ENCODE measurements at regions of chr12 and their contacts with region 1.

Region 1: DNA sequence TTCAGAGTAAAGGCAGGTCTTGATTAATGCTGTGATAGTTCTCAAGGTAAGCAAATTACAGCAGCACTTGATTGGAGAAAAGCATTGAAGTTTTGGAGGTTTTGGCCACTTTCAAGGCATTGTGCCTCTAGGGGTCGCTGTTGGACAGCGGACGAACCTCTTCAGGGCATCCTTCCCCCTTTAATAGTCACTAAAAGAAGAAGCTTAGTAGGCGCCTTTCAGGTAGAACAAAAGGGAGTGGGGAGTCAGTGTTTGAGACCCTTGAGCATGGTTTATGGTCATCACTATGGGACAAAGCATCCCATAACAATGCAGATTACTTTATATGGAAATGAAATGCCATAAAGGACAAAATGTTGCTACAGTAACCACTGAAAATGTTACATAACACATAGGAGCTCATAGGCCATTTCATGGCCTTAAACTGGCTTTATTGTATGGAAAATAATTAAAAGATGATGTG is 199.5 kb upstream of the DCN start:
- DNase-seq: peak; percentile 86 to 92
- ATAC-seq: peak; percentile 89
- H3K4me3 ChIP-seq: peak overlapping the region; percentile 72 to 83
- H3K27ac ChIP-seq: no peak overlapping the region
- H3K4me1 ChIP-seq: no peaks in the 10 kb centered on the region
- H3K27me3 ChIP-seq: no peaks in the 10 kb centered on the region

Region 2: DNA sequence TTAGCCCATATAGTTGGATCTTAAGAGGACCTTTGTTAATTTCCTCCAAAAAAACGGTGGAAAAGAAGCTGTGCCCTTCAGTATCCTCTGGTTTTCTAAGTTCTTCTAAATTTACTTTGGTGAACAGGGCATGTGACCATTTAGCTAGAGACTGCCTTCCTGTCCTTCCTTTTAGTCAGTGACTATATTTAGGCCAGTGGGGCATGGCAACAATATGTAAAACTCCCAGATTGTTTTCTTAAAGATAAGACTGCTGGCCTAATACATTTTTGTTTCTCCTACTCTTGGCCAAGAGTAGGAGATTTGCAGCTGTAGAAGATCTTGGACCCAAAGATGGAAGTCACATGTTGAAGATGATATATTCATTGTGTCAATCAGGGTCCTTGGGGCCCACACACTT is 125.6 kb after region 1 on chr12:
- intact Hi-C with region 1: loop called in 1 of 2 experiments (anchors 10 kb)
- DNase-seq: no peak
- ATAC-seq: peak; percentile 71
- H3K4me3 ChIP-seq: no peak overlapping the region
- H3K27ac ChIP-seq: no peak overlapping the region
- H3K4me1 ChIP-seq: peaks cover 0 to 4% of the 10 kb centered on the region in 2 donors
- H3K27me3 ChIP-seq: no peaks in the 10 kb centered on the region

Region 3: GRCh38 chr12:91811481-91812287 is 429.6 kb after region 1 on chr12:
- intact Hi-C with region 1: loop called in 1 of 2 experiments (anchors 5 kb)
- DNase-seq: peak; percentile 77 to 88
- ATAC-seq: peak; percentile 78
- H3K4me3 ChIP-seq: no peak overlapping the region
- H3K27ac ChIP-seq: no peak overlapping the region
- H3K4me1 ChIP-seq: no peaks in the 10 kb centered on the region
- H3K27me3 ChIP-seq: no peaks in the 10 kb centered on the region

Region 4: GRCh38 chr12:92570056-92570753 is 1188.1 kb after region 1 on chr12:
- intact Hi-C with region 1: loop called (anchors 5 kb)
- DNase-seq: no peak
- ATAC-seq: peak; percentile 88
- H3K4me3 ChIP-seq: no peak overlapping the region
- H3K27ac ChIP-seq: no peak overlapping the region
- H3K4me1 ChIP-seq: no peaks in the 10 kb centered on the region
- H3K27me3 ChIP-seq: no peaks in the 10 kb centered on the region

Region 5: GRCh38 chr12:92649511-92650227 is 1267.6 kb after region 1 on chr12:
- intact Hi-C with region 1: loop called in 1 of 2 experiments (anchors 5 kb)
- DNase-seq: peak in 1 of 2 donors; percentile 54
- ATAC-seq: peak; percentile 77
- H3K4me3 ChIP-seq: no peak overlapping the region
- H3K27ac ChIP-seq: no peak overlapping the region
- H3K4me1 ChIP-seq: no peaks in the 10 kb centered on the region
- H3K27me3 ChIP-seq: no peaks in the 10 kb centered on the region